Cardiac septum (tissue), 1 donor: ENCODE measurements at regions of chr18 and their contacts with region 1.

Region 1: DNA sequence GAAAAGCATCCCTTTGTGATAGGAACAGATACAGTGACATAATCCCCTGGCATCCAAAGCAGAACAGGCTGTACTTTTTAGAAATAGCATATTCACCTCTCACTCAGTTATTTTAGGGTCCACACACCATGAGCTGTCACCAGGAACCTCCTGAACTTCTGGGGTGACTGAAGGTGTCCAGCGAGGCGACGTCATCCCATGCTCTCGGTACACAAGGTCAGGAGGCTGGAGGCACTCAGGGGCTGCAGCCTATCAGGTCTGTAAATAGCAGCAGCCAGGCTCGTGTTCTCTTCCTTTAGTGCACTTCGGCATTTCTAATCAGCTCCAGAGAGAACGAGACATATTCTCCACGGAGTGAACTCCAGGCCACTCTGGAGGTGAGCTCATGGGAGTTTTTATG is 98.3 kb downstream of the GATA6 start:
- DNase-seq: peak; percentile 84

Region 2: GRCh38 chr18:21820035-21820810 is 447.5 kb before region 1 on chr18:
- intact Hi-C with region 1: loop called (anchors 10 kb)
- DNase-seq: no peak

Region 3: DNA sequence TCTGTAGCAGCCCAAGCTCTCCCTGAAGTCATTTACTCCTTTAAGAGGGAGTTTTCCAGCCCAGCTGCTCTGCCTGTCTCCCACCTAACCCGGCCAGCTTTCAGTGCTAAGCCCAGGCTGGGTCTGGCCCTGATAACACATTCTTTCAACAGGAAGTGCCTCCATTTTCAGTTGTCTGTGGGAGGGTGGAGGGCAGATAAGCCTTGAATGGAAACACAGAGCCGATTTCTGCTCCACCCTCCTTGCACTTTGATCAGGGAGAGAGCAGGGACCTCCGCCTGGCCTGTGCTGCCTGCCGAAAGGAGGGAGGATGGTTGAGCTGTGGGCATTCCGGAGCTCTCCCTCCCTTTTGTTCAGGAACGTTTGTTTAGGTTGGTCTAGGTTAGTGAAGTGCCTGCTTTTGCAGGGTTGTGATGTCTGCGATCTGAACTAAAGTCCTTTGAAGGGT is 73.5 kb before region 1 on chr18:
- intact Hi-C with region 1: loop called (anchors 2 kb)
- DNase-seq: peak; percentile 79

Region 4: GRCh38 chr18:22300665-22301636 is 33.3 kb after region 1 on chr18:
- intact Hi-C with region 1: no loop called
- DNase-seq: no peak

Region 5: GRCh38 chr18:22471546-22472131 is 203.9 kb after region 1 on chr18:
- intact Hi-C with region 1: loop called (anchors 1 kb)
- DNase-seq: peak; percentile 80